ENCODE measurements at regions of chr3 and their contacts with region 1.

Region 1: DNA sequence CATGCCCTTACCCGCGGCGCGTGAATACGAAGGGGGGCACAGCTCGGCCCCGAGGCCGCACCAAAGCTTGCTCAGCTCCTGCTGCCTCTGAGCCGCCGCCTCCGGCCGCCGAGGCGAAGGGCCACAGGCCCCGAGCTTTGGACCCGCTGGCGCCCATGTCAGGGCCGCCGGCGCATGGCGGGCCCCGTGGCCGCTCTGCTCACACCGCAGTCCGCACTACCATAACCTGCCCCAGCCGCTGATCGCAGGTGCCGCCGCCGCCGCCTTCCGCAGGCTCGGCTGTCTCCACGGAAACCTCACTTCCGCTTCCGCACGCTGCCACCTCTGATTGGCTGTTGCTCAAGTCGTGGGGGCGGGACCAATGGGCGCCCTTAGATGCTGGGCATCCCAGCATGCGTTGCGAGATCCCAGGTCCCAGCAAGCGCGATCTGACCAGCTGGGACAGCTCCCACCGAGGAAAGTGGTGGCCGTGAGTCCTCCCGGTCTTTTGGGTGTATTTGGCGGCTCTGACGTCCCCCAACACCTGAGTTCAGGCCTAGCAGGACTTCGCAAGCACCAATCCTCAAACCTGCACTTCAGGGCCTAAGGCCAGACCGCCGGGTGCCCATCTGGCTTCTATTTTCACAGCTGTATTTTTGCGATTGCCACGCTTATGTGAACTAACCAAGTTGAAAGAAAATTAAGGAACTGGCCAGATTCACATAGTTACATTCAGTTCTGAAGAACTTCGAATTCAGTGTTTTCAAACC is at the start of gene TUSC2:
- DNase-seq: peak; percentile 97
- ATAC-seq: peak; percentile 94
- H3K4me3 ChIP-seq: peak within 1 kb of the TSS; percentile 39 to 98 (median 87)
- H3K4me3 Mint-ChIP-seq: peak within 1 kb of the TSS; percentile 95
- H3K27ac ChIP-seq: peak within 1 kb of the TSS; percentile 66 to 90
- H3K27ac Mint-ChIP-seq: peak within 1 kb of the TSS; percentile 91
- H3K4me1 ChIP-seq: peaks cover 14 to 24% of the 10 kb centered on the region in 2 donors
- H3K4me1 Mint-ChIP-seq: peaks cover 25% of the 10 kb centered on the region
- H3K27me3 ChIP-seq: no peaks in the 10 kb centered on the region
- H3K27me3 Mint-ChIP-seq: no peaks in the 10 kb centered on the region
- CTCF ChIP-seq: no peak
- total RNA-seq, gene TUSC2: 25.5 and 28.2 TPM in 2 replicates

Region 2: DNA sequence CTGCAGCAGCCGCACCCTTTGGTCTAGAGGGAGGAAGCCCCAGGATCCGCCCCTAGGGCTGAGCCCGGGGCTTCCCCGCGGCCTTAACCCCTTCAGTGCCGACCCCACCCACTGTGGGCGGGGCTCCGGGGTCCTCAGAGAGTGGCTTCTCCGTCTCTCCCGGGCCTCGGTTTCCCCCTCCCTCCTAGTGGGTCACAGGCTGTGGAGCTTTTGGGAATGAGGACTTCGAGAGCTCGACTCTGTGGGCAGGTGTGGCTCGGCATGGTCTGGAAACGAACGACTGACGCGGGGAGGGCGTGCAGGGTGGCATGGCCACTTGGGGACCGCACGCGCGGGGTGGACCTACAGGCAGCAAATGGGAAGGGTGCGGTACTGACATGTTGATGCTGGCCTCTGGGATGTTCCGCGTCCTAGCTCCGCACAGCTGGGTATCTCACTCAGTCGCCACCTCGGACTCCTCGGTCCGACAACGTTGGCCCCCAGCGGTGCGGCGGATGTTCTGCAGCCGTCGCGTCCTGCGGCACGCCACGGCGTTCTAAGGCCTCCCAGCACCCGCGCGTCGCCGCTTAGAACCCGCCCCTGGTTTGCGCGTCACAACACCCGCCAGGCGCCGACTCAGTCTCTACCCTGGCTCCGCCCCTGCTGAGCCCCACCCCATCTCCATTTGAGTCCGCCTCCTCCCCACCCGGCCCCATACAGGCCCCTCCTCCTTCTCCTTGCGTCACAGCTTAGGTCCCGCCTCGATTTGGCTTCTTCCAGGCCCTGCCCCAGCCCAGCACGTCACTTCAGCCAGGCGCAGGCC is 29.1 kb before region 1 on chr3 and contains the starts of genes HYAL3 and NAA80:
- CTCF ChIA-PET with region 1: interaction called, 28 read pairs
- POLR2A ChIA-PET with region 1: interaction called, 24 read pairs
- intact Hi-C with region 1: loop called (anchors 1 kb)
- DNase-seq: peak; percentile 100
- ATAC-seq: peak; percentile 91
- H3K4me3 ChIP-seq: peak within 1 kb of the TSS; percentile 68 to 89 (median 88)
- H3K4me3 Mint-ChIP-seq: peak within 1 kb of the TSS; percentile 100
- H3K27ac ChIP-seq: peak within 1 kb of the TSS; percentile 77 to 84
- H3K27ac Mint-ChIP-seq: peak within 1 kb of the TSS; percentile 100
- H3K4me1 ChIP-seq: peaks cover 18 to 24% of the 10 kb centered on the region in 2 donors
- H3K4me1 Mint-ChIP-seq: peaks cover 33% of the 10 kb centered on the region
- H3K27me3 ChIP-seq: no peaks in the 10 kb centered on the region
- H3K27me3 Mint-ChIP-seq: no peaks in the 10 kb centered on the region
- CTCF ChIP-seq: peak; percentile 65
- total RNA-seq, gene HYAL3: 1.9 and 3.7 TPM in 2 replicates
- total RNA-seq, gene NAA80: 33.8 and 37.8 TPM in 2 replicates

Measured in B cell (primary cell).